Naive thymus-derived CD4-positive, alpha-beta T cell (primary cell): ENCODE measurements at regions of chr13 and their contacts with region 1.

Region 1: GRCh38 chr13:77329133-77329910 is 2.4 kb upstream of the MYCBP2 start:
- DNase-seq: peak; percentile 56 to 95 (median 93)
- ATAC-seq: peak; percentile 77
- H3K4me3 ChIP-seq: peak overlapping the region; percentile 93
- H3K4me3 Mint-ChIP-seq: peak overlapping the region; percentile 84 to 98 (median 94)
- H3K27ac ChIP-seq: peak overlapping the region; percentile 86
- H3K27ac Mint-ChIP-seq: peak overlapping the region; percentile 87 to 98 (median 94)
- H3K4me1 ChIP-seq: peaks cover 24 to 29% of the 10 kb centered on the region in 2 donors
- H3K4me1 Mint-ChIP-seq: peaks cover 16 to 65% (median 48%) of the 10 kb centered on the region in 7 donors
- H3K27me3 ChIP-seq: no peaks in the 10 kb centered on the region
- H3K27me3 Mint-ChIP-seq: peaks cover 0 to 9% (median 0%) of the 10 kb centered on the region in 5 donors

Region 2: GRCh38 chr13:75326173-75327134 is 2002.9 kb before region 1 on chr13:
- CTCF ChIA-PET with region 1: no interaction called
- POLR2A ChIA-PET with region 1: no interaction called
- intact Hi-C with region 1: loop called (anchors 5 kb)
- DNase-seq: peak; percentile 19 to 88 (median 82)
- ATAC-seq: peak; percentile 94
- H3K4me3 ChIP-seq: peak overlapping the region; percentile 71
- H3K4me3 Mint-ChIP-seq: peak overlapping the region; percentile 90 to 97 (median 94)
- H3K27ac ChIP-seq: peak overlapping the region; percentile 87
- H3K27ac Mint-ChIP-seq: peak overlapping the region; percentile 92 to 99 (median 98)
- H3K4me1 ChIP-seq: peaks cover 4 to 24% of the 10 kb centered on the region in 2 donors
- H3K4me1 Mint-ChIP-seq: peaks cover 22 to 63% (median 55%) of the 10 kb centered on the region in 7 donors
- H3K27me3 ChIP-seq: no peaks in the 10 kb centered on the region
- H3K27me3 Mint-ChIP-seq: no peaks in the 10 kb centered on the region

Region 3: DNA sequence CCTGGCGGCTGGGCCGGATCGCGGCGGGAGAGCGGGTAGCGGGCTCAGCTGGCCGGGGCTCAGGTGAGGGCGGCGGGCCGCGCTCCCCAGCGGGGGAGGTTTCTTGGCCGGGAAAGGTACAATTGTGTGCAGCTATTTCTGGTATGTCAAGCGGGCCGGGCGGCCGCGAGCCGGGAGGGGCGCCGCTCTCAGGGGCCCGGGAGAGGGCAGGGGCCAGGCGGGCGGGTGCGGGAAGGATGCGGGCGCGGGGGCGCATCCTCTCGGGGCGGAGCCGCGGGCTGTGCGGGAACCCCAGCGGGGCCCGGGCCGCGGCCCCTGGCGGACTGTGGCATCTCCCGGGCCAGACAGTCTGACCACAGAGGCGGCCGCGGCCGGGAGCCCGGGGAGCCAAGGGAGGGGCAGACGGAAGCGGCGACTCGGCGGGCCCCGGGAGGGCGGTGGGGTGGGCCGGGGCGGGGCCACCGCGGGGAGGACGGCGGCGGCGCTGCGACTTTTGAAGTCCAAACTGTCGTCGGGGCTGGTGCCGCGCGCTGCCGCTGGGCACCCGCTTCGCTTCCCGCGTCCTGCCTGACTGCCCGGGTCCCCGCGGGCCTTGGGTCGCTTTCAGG is 1693.4 kb before region 1 on chr13 and contains the start of gene LMO7:
- CTCF ChIA-PET with region 1: no interaction called
- POLR2A ChIA-PET with region 1: no interaction called
- intact Hi-C with region 1: loop called (anchors 2 to 10 kb)
- DNase-seq: peak; percentile 39 to 60 (median 44)
- ATAC-seq: peak; percentile 69
- H3K4me3 ChIP-seq: peak within 1 kb of the TSS; percentile 75
- H3K4me3 Mint-ChIP-seq: peak within 1 kb of the TSS; percentile 77 to 91 (median 85)
- H3K27ac ChIP-seq: peak within 1 kb of the TSS; percentile 34
- H3K27ac Mint-ChIP-seq: peak within 1 kb of the TSS; percentile 38 to 82 (median 71)
- H3K4me1 ChIP-seq: no peaks in the 10 kb centered on the region
- H3K4me1 Mint-ChIP-seq: peaks cover 7 to 23% (median 18%) of the 10 kb centered on the region in 7 donors
- H3K27me3 ChIP-seq: no peaks in the 10 kb centered on the region
- H3K27me3 Mint-ChIP-seq: peaks cover 0 to 21% (median 10%) of the 10 kb centered on the region in 5 donors
- total RNA-seq, gene LMO7: 18.0 to 68.1 (median 45.3) TPM

Region 4: DNA sequence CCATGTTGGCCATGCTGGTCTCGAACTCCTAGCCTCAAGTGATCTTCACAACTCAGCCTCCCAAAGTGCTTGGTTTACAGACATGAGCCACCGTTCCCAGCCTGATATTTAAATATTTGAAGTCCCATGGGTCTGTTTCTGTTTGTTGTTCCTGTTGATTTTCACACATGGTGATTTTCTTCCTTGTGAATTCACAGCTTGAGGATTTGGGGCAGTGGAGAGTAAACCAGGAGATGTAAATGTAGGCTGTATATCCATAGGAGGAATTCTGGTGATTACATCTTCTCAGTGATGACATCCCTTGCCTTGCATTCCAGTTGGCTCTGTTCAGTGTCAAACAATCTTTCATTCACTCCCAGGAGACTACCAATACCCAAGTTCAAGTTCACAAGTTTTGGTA is 915.0 kb before region 1 on chr13:
- CTCF ChIA-PET with region 1: no interaction called
- POLR2A ChIA-PET with region 1: no interaction called
- intact Hi-C with region 1: no loop called
- DNase-seq: no peak
- ATAC-seq: no peak
- H3K4me3 ChIP-seq: no peak overlapping the region
- H3K4me3 Mint-ChIP-seq: no peak overlapping the region
- H3K27ac ChIP-seq: no peak overlapping the region
- H3K27ac Mint-ChIP-seq: no peak overlapping the region
- H3K4me1 ChIP-seq: no peaks in the 10 kb centered on the region
- H3K4me1 Mint-ChIP-seq: peaks cover 0 to 5% (median 0%) of the 10 kb centered on the region in 7 donors
- H3K27me3 ChIP-seq: no peaks in the 10 kb centered on the region
- H3K27me3 Mint-ChIP-seq: peaks cover 0 to 13% (median 3%) of the 10 kb centered on the region in 5 donors

Region 5: DNA sequence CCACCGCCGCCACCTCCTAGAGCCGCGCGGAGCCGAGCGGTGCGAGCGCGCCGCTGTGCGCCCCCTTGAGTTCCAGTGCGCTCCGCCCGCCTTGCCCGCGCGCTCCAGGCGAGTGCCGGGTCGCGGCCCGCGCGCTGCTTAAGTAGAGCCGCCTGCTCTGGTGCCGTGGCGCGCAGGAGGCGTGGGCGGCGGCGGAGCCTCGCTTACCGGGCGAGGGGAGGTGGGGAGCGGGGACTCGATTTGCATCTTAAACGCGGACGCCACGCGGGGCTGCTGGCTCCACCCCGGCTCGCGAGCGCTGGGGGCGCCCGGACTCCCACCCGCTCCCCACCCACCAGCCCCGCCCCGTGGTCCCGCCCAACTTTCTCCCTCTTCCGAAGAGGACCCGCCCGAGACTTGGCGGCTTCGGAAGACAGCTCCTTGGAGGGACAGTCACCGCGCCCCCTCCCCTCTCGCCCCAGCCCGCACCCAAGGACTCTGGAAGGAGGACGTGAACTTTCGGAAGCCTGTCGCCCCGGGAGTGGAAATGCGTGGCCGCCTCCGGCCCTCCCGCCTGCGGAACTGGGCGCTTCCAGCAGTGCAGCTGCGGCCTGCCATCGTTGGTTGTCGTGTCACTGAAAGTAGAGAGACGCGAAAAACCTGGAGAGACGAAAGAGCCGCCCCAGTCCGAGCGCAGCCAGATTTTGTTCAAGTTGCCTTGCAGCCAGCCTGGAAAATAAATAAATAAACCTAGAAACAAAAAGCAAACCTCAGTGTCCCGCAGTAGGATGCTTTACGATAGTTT is 442.8 kb before region 1 on chr13 and contains the start of gene KCTD12:
- CTCF ChIA-PET with region 1: no interaction called
- POLR2A ChIA-PET with region 1: interaction called, 8 read pairs
- intact Hi-C with region 1: loop called (anchors 1 to 2 kb)
- DNase-seq: peak; percentile 73 to 84 (median 80)
- ATAC-seq: peak; percentile 86
- H3K4me3 ChIP-seq: peak within 1 kb of the TSS; percentile 62
- H3K4me3 Mint-ChIP-seq: peak within 1 kb of the TSS; percentile 88 to 95 (median 92)
- H3K27ac ChIP-seq: peak within 1 kb of the TSS; percentile 55
- H3K27ac Mint-ChIP-seq: peak within 1 kb of the TSS; percentile 63 to 85 (median 76)
- H3K4me1 ChIP-seq: peaks cover 4 to 8% of the 10 kb centered on the region in 2 donors
- H3K4me1 Mint-ChIP-seq: peaks cover 20 to 37% (median 32%) of the 10 kb centered on the region in 7 donors
- H3K27me3 ChIP-seq: peaks cover 0 to 3% of the 10 kb centered on the region in 2 donors
- H3K27me3 Mint-ChIP-seq: peaks cover 0 to 47% (median 8%) of the 10 kb centered on the region in 5 donors
- total RNA-seq, gene KCTD12: 7.6 to 48.0 (median 14.0) TPM

Region 6: GRCh38 chr13:77184455-77184854 is 144.9 kb before region 1 on chr13:
- CTCF ChIA-PET with region 1: no interaction called
- POLR2A ChIA-PET with region 1: interaction called, 5 read pairs
- intact Hi-C with region 1: loop called in 1 of 2 experiments (anchors 5 kb)
- DNase-seq: peak in 1 of 9 donors; percentile 30
- ATAC-seq: peak; percentile 61
- H3K4me3 ChIP-seq: no peak overlapping the region
- H3K4me3 Mint-ChIP-seq: peak overlapping the region in 2 of 10 donors; percentile 8 to 16
- H3K27ac ChIP-seq: no peak overlapping the region
- H3K27ac Mint-ChIP-seq: peak overlapping the region in 8 of 9 donors; percentile 17 to 86 (median 68)
- H3K4me1 ChIP-seq: no peaks in the 10 kb centered on the region
- H3K4me1 Mint-ChIP-seq: peaks cover 10 to 29% (median 22%) of the 10 kb centered on the region in 7 donors
- H3K27me3 ChIP-seq: no peaks in the 10 kb centered on the region
- H3K27me3 Mint-ChIP-seq: no peaks in the 10 kb centered on the region

Region 7: DNA sequence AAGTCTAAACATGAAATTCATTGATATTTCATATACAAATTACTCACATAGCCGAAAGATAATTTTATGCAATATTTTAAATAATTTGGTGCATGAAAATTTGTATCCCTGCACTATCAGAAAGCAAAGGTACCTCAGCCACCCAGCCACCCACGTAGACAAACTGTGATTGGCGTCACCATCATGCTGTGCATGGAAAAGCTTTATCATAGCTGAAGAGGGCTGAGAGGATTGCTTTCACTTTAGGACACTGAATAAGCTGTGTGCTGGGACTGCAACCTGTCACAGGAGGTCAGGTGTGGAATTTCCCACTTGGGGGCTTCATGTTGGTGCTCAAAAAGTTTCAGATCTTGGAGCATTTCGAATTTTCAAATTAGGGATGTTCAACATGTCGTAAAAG is 98.8 kb before region 1 on chr13:
- CTCF ChIA-PET with region 1: no interaction called
- POLR2A ChIA-PET with region 1: no interaction called
- intact Hi-C with region 1: no loop called
- DNase-seq: no peak
- ATAC-seq: no peak
- H3K4me3 ChIP-seq: no peak overlapping the region
- H3K4me3 Mint-ChIP-seq: no peak overlapping the region
- H3K27ac ChIP-seq: no peak overlapping the region
- H3K27ac Mint-ChIP-seq: peak overlapping the region in 1 of 9 donors; percentile 24
- H3K4me1 ChIP-seq: peaks cover 0 to 3% of the 10 kb centered on the region in 2 donors
- H3K4me1 Mint-ChIP-seq: peaks cover 13 to 35% (median 22%) of the 10 kb centered on the region in 7 donors
- H3K27me3 ChIP-seq: no peaks in the 10 kb centered on the region
- H3K27me3 Mint-ChIP-seq: no peaks in the 10 kb centered on the region

Region 8: GRCh38 chr13:77316430-77316829 is 12.9 kb before region 1 on chr13:
- CTCF ChIA-PET with region 1: interaction called, 3 read pairs
- POLR2A ChIA-PET with region 1: interaction called, 16 read pairs
- intact Hi-C with region 1: loop called in 1 of 2 experiments (anchors 2 kb)
- DNase-seq: no peak
- ATAC-seq: no peak
- H3K4me3 ChIP-seq: no peak overlapping the region
- H3K4me3 Mint-ChIP-seq: peak overlapping the region in 8 of 10 donors; percentile 26 to 65 (median 52)
- H3K27ac ChIP-seq: no peak overlapping the region
- H3K27ac Mint-ChIP-seq: peak overlapping the region in 7 of 9 donors; percentile 28 to 84 (median 60)
- H3K4me1 ChIP-seq: peaks cover 24 to 38% of the 10 kb centered on the region in 2 donors
- H3K4me1 Mint-ChIP-seq: peaks cover 64 to 100% (median 91%) of the 10 kb centered on the region in 7 donors
- H3K27me3 ChIP-seq: no peaks in the 10 kb centered on the region
- H3K27me3 Mint-ChIP-seq: no peaks in the 10 kb centered on the region

Region 9: GRCh38 chr13:77460195-77460594 is 130.9 kb after region 1 on chr13:
- CTCF ChIA-PET with region 1: no interaction called
- POLR2A ChIA-PET with region 1: no interaction called
- intact Hi-C with region 1: no loop called
- DNase-seq: no peak
- ATAC-seq: peak; percentile 89
- H3K4me3 ChIP-seq: no peak overlapping the region
- H3K4me3 Mint-ChIP-seq: no peak overlapping the region
- H3K27ac ChIP-seq: no peak overlapping the region
- H3K27ac Mint-ChIP-seq: no peak overlapping the region
- H3K4me1 ChIP-seq: no peaks in the 10 kb centered on the region
- H3K4me1 Mint-ChIP-seq: peaks cover 0 to 6% (median 0%) of the 10 kb centered on the region in 7 donors
- H3K27me3 ChIP-seq: no peaks in the 10 kb centered on the region
- H3K27me3 Mint-ChIP-seq: peaks cover 0 to 21% (median 8%) of the 10 kb centered on the region in 5 donors

Region 10: GRCh38 chr13:77697217-77698103 is 368.1 kb after region 1 on chr13 and contains the start of gene SLAIN1:
- CTCF ChIA-PET with region 1: no interaction called
- POLR2A ChIA-PET with region 1: interaction called, 13 read pairs
- intact Hi-C with region 1: loop called (anchors 1 kb)
- DNase-seq: peak; percentile 78 to 90 (median 85)
- ATAC-seq: peak; percentile 90
- H3K4me3 ChIP-seq: peak within 1 kb of the TSS; percentile 94
- H3K4me3 Mint-ChIP-seq: peak within 1 kb of the TSS; percentile 90 to 100 (median 95)
- H3K27ac ChIP-seq: peak within 1 kb of the TSS; percentile 87
- H3K27ac Mint-ChIP-seq: peak within 1 kb of the TSS; percentile 66 to 96 (median 86)
- H3K4me1 ChIP-seq: peaks cover 17 to 18% of the 10 kb centered on the region in 2 donors
- H3K4me1 Mint-ChIP-seq: peaks cover 13 to 53% (median 43%) of the 10 kb centered on the region in 7 donors
- H3K27me3 ChIP-seq: no peaks in the 10 kb centered on the region
- H3K27me3 Mint-ChIP-seq: peaks cover 0 to 40% (median 0%) of the 10 kb centered on the region in 5 donors
- total RNA-seq, gene SLAIN1: 28.3 to 67.8 (median 42.4) TPM

Region 11: GRCh38 chr13:78978381-78978998 is 1649.2 kb after region 1 on chr13:
- CTCF ChIA-PET with region 1: no interaction called
- POLR2A ChIA-PET with region 1: no interaction called
- intact Hi-C with region 1: no loop called
- DNase-seq: peak in 6 of 9 donors; percentile 15 to 51 (median 40)
- ATAC-seq: peak; percentile 84
- H3K4me3 ChIP-seq: no peak overlapping the region
- H3K4me3 Mint-ChIP-seq: no peak overlapping the region
- H3K27ac ChIP-seq: no peak overlapping the region
- H3K27ac Mint-ChIP-seq: no peak overlapping the region
- H3K4me1 ChIP-seq: no peaks in the 10 kb centered on the region
- H3K4me1 Mint-ChIP-seq: no peaks in the 10 kb centered on the region
- H3K27me3 ChIP-seq: no peaks in the 10 kb centered on the region
- H3K27me3 Mint-ChIP-seq: peaks cover 9 to 37% (median 14%) of the 10 kb centered on the region in 5 donors